ENCODE measurements at regions of chr16 and their contacts with region 1.

Region 1: GRCh38 chr16:3101018-3101840 is 2.1 kb upstream of the ZSCAN10 start:
- DNase-seq: peak; percentile 53
- H3K4me3 Mint-ChIP-seq: no peak overlapping the region
- H3K27ac Mint-ChIP-seq: no peak overlapping the region
- H3K4me1 Mint-ChIP-seq: peaks cover 6% of the 10 kb centered on the region
- H3K27me3 Mint-ChIP-seq: no peaks in the 10 kb centered on the region
- CTCF ChIP-seq: peak; percentile 57

Region 2: GRCh38 chr16:3112058-3112880 is 11.0 kb after region 1 on chr16 and contains the start of gene ZNF205:
- CTCF ChIA-PET with region 1: interaction called, 10 read pairs
- POLR2A ChIA-PET with region 1: interaction called, 19 read pairs
- intact Hi-C with region 1: no loop called
- DNase-seq: peak; percentile 79
- H3K4me3 Mint-ChIP-seq: peak within 1 kb of the TSS; percentile 85
- H3K27ac Mint-ChIP-seq: peak within 1 kb of the TSS; percentile 29
- H3K4me1 Mint-ChIP-seq: peaks cover 13% of the 10 kb centered on the region
- H3K27me3 Mint-ChIP-seq: no peaks in the 10 kb centered on the region
- CTCF ChIP-seq: no peak
- total RNA-seq, gene ZNF205: 11.8 and 12.1 TPM in 2 replicates

Region 3: DNA sequence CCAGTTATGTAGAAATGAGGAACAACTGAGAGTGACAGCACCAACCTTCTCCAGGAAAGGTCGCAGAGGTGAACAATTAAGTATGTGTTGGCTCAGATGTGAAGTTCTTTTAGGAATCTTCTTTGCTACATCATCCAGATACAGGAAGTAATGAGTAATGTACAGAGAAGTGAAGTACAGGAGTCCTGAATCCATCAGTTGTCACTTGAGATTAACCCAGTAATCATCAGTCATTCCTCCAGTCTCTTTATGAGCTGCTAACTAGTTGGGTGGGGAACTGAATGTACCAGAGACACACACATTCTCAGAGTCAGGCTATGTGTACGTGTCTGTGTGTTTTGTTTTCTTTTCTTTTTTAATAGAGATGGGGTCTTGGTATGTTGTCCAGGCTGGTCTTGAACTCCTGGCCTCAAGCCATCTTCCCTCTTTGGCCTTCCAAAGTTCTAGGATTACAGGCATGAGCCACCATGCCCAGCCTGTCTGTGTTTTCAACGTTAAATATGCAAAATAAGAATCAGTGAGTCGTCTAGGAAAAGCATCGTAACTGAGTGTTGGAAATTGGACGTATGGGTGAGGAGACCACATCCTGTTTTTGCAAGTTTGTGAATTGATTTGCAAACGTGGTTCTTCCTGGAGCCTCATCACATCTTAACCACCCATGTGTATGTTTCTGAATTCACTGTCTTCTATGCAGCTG is 113.8 kb after region 1 on chr16:
- CTCF ChIA-PET with region 1: no interaction called
- POLR2A ChIA-PET with region 1: no interaction called
- intact Hi-C with region 1: no loop called
- DNase-seq: no peak
- H3K4me3 Mint-ChIP-seq: no peak overlapping the region
- H3K27ac Mint-ChIP-seq: no peak overlapping the region
- H3K4me1 Mint-ChIP-seq: no peaks in the 10 kb centered on the region
- H3K27me3 Mint-ChIP-seq: peaks cover 36% of the 10 kb centered on the region
- CTCF ChIP-seq: no peak

Measured in MCF 10A (cell line).